Activated B cell treated with CpG ODN at 0.5 μM for 24 hours (primary cell): ENCODE measurements at regions of chr18 and their contacts with region 1.

Region 1: DNA sequence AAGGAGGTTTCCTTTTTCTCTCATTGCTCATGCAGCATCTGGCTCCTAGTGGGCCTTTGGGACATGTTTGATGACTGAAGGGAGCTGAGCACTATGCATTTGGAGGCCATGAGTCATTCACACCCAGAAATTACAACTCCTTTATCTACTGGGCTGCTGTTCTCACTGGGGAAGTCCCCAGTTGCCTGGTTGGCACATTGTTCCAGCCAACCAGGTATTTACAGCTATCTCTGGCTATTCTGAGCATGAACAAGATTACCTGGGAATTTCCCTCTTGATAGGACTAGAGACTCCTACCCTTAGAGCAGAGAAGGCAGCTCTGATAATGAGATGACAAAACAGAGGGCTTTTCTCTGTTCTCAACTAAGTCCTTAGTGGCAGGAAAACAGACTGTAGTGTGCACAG is 206.5 kb downstream of the SETBP1 start:
- DNase-seq: peak; percentile 23
- ATAC-seq: peak; percentile 95
- H3K4me3 Mint-ChIP-seq: peak overlapping the region; percentile 59
- H3K27ac Mint-ChIP-seq: peak overlapping the region; percentile 94
- H3K4me1 Mint-ChIP-seq: peaks cover 58% of the 10 kb centered on the region
- H3K27me3 Mint-ChIP-seq: no peaks in the 10 kb centered on the region
- CTCF ChIP-seq: no peak

Region 2: DNA sequence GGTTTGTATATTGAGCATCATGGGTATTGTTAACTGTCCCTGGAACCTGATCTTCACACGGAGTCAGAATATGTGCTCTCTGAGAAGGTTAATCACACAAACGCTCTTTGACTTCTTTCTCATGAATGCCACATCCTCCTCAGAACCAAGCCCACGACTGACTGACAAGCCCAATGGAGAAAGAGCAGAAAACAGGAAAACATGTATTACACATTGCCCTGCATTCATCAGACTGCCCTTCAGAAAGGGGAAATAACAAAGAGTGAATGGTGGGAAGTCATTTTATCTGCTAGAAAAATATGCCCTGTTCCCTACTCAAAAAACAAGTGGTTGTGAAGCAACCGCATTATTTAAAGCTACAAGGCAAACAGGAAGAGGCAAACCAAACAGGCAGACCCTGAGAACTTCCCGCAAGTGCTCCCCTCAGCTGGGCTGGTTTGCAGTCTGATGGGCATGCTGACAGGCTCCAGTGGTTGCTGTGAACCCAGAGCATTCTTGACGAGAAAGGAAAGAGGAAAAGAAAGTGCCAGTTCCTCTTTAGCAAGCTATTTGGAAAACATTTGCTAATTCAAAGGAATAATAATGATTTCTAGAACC is 379.4 kb before region 1 on chr18:
- CTCF ChIA-PET with region 1: no interaction called
- POLR2A ChIA-PET with region 1: no interaction called
- intact Hi-C with region 1: loop called (anchors 10 kb)
- DNase-seq: peak; percentile 26
- ATAC-seq: peak; percentile 90
- H3K4me3 Mint-ChIP-seq: no peak overlapping the region
- H3K27ac Mint-ChIP-seq: no peak overlapping the region
- H3K4me1 Mint-ChIP-seq: peaks cover 24% of the 10 kb centered on the region
- H3K27me3 Mint-ChIP-seq: no peaks in the 10 kb centered on the region
- CTCF ChIP-seq: no peak

Region 3: GRCh38 chr18:44799907-44800421 is 87.3 kb before region 1 on chr18:
- CTCF ChIA-PET with region 1: no interaction called
- POLR2A ChIA-PET with region 1: interaction called, 3 read pairs
- intact Hi-C with region 1: loop called (anchors 1 kb)
- DNase-seq: no peak
- ATAC-seq: peak; percentile 43
- H3K4me3 Mint-ChIP-seq: peak overlapping the region; percentile 61
- H3K27ac Mint-ChIP-seq: peak overlapping the region; percentile 86
- H3K4me1 Mint-ChIP-seq: peaks cover 94% of the 10 kb centered on the region
- H3K27me3 Mint-ChIP-seq: no peaks in the 10 kb centered on the region
- CTCF ChIP-seq: no peak

Region 4: GRCh38 chr18:44838971-44839666 is 48.1 kb before region 1 on chr18:
- CTCF ChIA-PET with region 1: no interaction called
- POLR2A ChIA-PET with region 1: interaction called, 5 read pairs
- intact Hi-C with region 1: loop called (anchors 1 kb)
- DNase-seq: peak; percentile 58
- ATAC-seq: peak; percentile 83
- H3K4me3 Mint-ChIP-seq: peak overlapping the region; percentile 61
- H3K27ac Mint-ChIP-seq: peak overlapping the region; percentile 81
- H3K4me1 Mint-ChIP-seq: peaks cover 81% of the 10 kb centered on the region
- H3K27me3 Mint-ChIP-seq: no peaks in the 10 kb centered on the region
- CTCF ChIP-seq: no peak

Region 5: DNA sequence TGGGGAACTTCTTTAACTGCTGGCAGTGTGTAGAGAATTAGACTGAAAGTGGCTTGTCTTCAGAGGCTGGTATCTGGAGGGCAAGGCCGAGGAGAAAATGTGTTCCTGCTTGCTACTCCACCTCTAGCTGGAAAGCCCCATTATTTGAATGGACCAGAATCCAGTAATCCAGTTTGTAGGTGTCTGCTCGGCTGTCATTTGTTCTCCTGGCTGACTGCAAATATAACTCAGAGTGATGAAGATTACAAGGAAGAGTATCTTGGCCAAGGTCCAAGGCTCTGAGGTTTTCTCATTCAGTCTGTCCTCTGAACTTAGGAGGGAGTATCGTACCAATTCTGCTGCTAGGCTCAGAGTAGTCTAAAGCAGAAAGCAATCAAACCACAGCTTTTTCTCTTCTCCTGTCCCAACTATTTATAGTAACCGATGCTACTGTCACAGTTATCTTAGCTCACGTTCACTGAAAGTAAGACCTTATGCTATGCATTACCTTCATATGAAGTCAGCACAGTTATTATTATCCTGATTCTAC is 22.0 kb after region 1 on chr18:
- CTCF ChIA-PET with region 1: no interaction called
- POLR2A ChIA-PET with region 1: interaction called, 8 read pairs
- intact Hi-C with region 1: loop called (anchors 1 kb)
- DNase-seq: no peak
- ATAC-seq: peak; percentile 75
- H3K4me3 Mint-ChIP-seq: peak overlapping the region; percentile 50
- H3K27ac Mint-ChIP-seq: peak overlapping the region; percentile 82
- H3K4me1 Mint-ChIP-seq: peaks cover 55% of the 10 kb centered on the region
- H3K27me3 Mint-ChIP-seq: no peaks in the 10 kb centered on the region
- CTCF ChIP-seq: no peak